PC-9 (cell line): ENCODE measurements at regions of chr2 and their contacts with region 1.

Region 1: DNA sequence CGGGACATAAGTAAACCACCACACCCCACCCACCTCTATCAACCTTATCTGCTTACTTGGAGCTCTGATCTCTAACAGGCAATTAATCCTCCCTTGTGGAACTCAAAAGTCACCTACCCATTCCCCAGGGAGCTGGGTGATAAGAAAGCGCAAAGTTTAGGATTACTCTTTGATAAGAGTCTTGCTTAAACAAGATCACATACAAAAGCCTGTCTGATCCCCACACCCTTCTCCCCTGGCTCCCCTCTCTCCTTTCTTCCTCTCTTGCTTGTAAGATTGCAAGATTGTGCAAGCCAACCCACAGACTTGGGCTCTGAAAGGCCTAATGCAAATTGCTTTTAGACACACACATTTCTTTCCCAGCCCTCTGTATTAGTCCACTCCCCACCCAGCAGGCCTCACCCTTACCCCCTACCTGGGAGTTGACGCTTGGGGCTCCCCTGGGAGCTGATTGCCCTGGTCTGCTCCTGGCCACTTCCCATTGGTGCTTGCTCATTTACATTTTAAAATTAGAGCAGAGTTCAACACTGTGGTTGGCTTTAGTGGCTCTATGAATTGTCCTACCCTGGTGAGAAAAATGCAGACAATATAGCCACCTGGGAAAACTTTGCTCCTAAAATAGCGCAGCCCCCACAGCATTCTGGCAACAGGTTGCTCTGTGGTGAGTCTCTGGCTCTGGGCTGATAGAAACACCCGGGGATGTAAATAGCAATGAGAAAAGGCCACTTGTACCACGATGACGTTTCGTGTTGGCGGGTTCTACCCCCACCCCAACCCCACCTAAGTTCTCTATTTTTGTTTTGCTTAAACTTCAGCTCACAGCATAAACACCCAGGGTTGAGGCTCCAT is 92.8 kb upstream of the MSH2 start:
- DNase-seq: peak; percentile 73 to 99
- H3K4me3 ChIP-seq: peak overlapping the region; percentile 30; the same call in 1 of the 2 replicates
- H3K27ac ChIP-seq: peak overlapping the region; percentile 96
- H3K4me1 ChIP-seq: peaks cover 74% of the 10 kb centered on the region
- H3K27me3 ChIP-seq: no peaks in the 10 kb centered on the region
- CTCF ChIP-seq: no peak

Region 2: GRCh38 chr2:45946023-45946422 is 1364.2 kb before region 1 on chr2:
- CTCF ChIA-PET with region 1: interaction called, 13 read pairs
- POLR2A ChIA-PET with region 1: no interaction called
- intact Hi-C with region 1: no loop called
- DNase-seq: peak; percentile 89 to 98
- H3K4me3 ChIP-seq: no peak overlapping the region
- H3K27ac ChIP-seq: peak overlapping the region; percentile 39
- H3K4me1 ChIP-seq: peaks cover 44% of the 10 kb centered on the region
- H3K27me3 ChIP-seq: no peaks in the 10 kb centered on the region
- CTCF ChIP-seq: no peak

Region 3: DNA sequence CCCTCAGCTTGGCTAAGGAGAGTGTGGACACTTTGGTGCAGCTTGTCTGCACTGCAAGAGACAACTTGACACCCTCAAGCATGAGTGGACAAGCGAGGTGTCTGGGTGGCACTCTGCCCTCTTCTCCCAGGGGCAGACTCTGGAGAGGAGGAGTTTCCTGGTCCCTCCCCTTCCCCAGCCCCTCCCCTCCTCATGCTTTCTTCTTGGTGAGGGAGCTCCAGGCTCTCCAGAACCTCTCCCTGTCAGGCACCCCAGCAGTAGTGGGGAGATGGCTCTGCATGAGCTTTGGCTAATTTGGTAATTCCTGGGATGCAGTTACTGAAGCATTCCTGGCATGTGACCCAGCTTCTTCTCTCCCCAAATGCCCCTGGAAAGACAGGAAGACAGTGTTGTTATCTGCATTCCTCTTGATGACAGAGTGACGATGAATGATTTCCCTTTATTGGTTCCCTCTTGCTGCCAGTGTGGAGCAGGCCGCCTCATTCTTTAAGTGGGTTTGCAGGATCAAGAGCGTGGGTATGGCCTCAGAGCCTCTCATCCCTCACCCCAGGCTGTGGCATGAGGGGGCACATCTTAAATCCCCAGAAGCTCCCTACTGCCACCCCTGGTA is 244.3 kb before region 1 on chr2:
- CTCF ChIA-PET with region 1: no interaction called
- POLR2A ChIA-PET with region 1: interaction called, 23 read pairs
- intact Hi-C with region 1: no loop called
- DNase-seq: peak; percentile 65 to 78
- H3K4me3 ChIP-seq: no peak overlapping the region
- H3K27ac ChIP-seq: peak overlapping the region; percentile 44
- H3K4me1 ChIP-seq: peaks cover 66% of the 10 kb centered on the region
- H3K27me3 ChIP-seq: no peaks in the 10 kb centered on the region
- CTCF ChIP-seq: no peak

Region 4: DNA sequence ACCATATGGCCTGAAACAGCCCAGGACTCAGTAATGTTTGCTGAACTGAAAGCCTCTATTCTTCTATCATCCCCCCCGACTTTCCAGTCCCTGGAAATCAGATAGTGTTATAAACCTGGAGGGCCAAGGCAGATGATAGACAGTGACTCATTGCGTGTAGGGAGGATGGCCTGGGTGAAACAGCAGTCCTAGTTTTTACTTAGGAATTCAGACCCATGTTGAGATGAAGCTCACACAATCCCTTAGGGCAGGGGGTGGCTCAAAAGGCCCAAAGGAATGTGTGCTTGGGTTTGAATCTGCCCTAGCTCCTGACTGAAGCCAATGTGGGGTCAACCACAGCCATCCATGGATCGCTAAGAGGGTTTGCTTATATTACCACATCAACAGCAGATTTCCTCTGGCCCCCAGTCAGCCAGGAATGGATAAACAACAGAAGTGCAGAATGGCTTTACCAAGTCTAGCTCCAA is 111.2 kb before region 1 on chr2:
- CTCF ChIA-PET with region 1: no interaction called
- POLR2A ChIA-PET with region 1: no interaction called
- intact Hi-C with region 1: loop called (anchors 5 kb)
- DNase-seq: peak; percentile 85 to 99
- H3K4me3 ChIP-seq: no peak overlapping the region
- H3K27ac ChIP-seq: peak overlapping the region; percentile 69
- H3K4me1 ChIP-seq: peaks cover 81% of the 10 kb centered on the region
- H3K27me3 ChIP-seq: no peaks in the 10 kb centered on the region
- CTCF ChIP-seq: no peak

Region 5: GRCh38 chr2:47272031-47272864 is 37.9 kb before region 1 on chr2:
- CTCF ChIA-PET with region 1: no interaction called
- POLR2A ChIA-PET with region 1: no interaction called
- intact Hi-C with region 1: loop called (anchors 1 kb)
- DNase-seq: peak; percentile 79 to 92
- H3K4me3 ChIP-seq: peak overlapping the region; percentile 56; the same call in 1 of the 2 replicates
- H3K27ac ChIP-seq: peak overlapping the region; percentile 99
- H3K4me1 ChIP-seq: peaks cover 62% of the 10 kb centered on the region
- H3K27me3 ChIP-seq: no peaks in the 10 kb centered on the region
- CTCF ChIP-seq: peak; percentile 100

Region 6: DNA sequence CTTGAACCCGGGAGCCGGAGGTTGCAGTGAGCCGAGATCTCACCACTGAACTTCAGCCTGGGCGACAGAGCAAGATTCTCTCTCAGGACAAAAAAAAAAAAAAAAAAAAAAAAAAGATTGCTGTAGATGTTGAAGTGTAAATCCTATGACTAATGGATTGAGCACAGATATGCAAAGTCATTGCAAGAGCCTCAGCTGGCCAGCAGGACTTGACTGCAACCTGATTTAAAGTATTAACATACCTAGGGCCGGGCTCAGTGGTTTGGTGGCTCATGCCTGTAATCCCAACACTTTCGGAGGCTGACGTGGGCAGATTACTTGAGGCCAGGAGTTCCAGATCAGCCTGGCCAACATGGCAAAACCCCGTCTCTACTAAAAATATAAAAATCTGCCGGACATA is 10.6 kb before region 1 on chr2:
- CTCF ChIA-PET with region 1: no interaction called
- POLR2A ChIA-PET with region 1: interaction called, 14 read pairs
- intact Hi-C with region 1: no loop called
- DNase-seq: peak; percentile 59 to 89
- H3K4me3 ChIP-seq: no peak overlapping the region
- H3K27ac ChIP-seq: peak overlapping the region; percentile 48; the same call in 1 of the 2 replicates
- H3K4me1 ChIP-seq: peaks cover 33% of the 10 kb centered on the region
- H3K27me3 ChIP-seq: no peaks in the 10 kb centered on the region
- CTCF ChIP-seq: no peak